ENCODE measurements at regions of chr2 and their contacts with region 1.

Region 1: GRCh38 chr2:43226558-43226954 is at the start of gene ZFP36L2:
- DNase-seq: peak; percentile 92
- ATAC-seq: peak; percentile 63
- H3K4me3 ChIP-seq: peak within 1 kb of the TSS; percentile 80 to 97 (median 89)
- H3K27ac ChIP-seq: peak within 1 kb of the TSS; percentile 95
- H3K4me1 ChIP-seq: peaks cover 54% of the 10 kb centered on the region
- H3K27me3 ChIP-seq: no peaks in the 10 kb centered on the region
- CTCF ChIP-seq: no peak; the same call in 1 of the 2 replicates
- EP300 ChIP-seq: peak in 1 of 2 experiments; percentile 15; a peak in 1 of 4 replicates
- POLR2A ChIP-seq: peak in 1 of 2 experiments; percentile 98; a peak in 2 of 4 replicates
- RAD21 ChIP-seq: peak; percentile 36; the same call in 1 of the 2 replicates
- total RNA-seq, gene ZFP36L2: 21.8 and 32.5 TPM in 2 replicates

Region 2: DNA sequence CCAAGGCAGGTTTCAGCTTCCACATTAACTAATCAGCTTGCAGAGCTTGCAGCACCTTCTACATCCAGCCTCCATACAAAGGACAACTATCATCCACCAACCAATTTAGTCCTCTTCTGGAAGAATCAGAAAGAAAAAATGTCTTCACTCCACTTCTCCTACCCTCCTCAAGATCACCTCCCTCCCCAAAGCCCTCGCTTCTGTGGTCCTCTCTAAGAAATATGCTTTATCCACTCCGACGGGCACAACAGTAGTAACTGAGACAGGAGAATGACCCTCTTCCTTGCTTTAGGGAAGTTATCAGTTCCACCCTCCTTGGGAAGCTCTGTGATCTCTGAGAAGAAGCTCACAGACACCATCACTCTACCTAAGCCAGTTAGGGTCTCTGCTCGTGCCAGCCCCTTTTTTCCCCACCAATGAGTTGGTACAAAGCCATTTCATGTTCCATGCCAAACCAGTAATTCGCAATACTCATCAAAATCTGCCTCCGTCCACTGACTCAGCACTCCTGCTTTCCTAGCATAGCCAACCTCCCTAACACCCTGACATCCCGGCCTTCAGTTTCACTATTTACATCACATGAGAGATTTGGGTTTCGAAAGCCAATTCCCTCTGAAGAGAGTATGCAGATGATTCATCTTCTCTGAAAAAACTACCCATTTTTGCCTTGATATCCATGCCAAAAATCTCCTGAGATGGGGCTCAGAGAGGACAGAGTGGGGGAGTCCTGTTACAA is 1292.8 kb before region 1 on chr2:
- CTCF ChIA-PET with region 1: no interaction called
- POLR2A ChIA-PET with region 1: no interaction called
- in situ Hi-C with region 1: no loop called
- intact Hi-C with region 1: no loop called
- DNase-seq: no peak
- ATAC-seq: no peak
- H3K4me3 ChIP-seq: no peak overlapping the region
- H3K27ac ChIP-seq: no peak overlapping the region
- H3K4me1 ChIP-seq: no peaks in the 10 kb centered on the region
- H3K27me3 ChIP-seq: peaks cover 0 to 44% of the 10 kb centered on the region in 2 experiments; a peak in 4 of 5 replicates
- CTCF ChIP-seq: no peak
- EP300 ChIP-seq: no peak
- POLR2A ChIP-seq: no peak
- RAD21 ChIP-seq: no peak

Region 3: DNA sequence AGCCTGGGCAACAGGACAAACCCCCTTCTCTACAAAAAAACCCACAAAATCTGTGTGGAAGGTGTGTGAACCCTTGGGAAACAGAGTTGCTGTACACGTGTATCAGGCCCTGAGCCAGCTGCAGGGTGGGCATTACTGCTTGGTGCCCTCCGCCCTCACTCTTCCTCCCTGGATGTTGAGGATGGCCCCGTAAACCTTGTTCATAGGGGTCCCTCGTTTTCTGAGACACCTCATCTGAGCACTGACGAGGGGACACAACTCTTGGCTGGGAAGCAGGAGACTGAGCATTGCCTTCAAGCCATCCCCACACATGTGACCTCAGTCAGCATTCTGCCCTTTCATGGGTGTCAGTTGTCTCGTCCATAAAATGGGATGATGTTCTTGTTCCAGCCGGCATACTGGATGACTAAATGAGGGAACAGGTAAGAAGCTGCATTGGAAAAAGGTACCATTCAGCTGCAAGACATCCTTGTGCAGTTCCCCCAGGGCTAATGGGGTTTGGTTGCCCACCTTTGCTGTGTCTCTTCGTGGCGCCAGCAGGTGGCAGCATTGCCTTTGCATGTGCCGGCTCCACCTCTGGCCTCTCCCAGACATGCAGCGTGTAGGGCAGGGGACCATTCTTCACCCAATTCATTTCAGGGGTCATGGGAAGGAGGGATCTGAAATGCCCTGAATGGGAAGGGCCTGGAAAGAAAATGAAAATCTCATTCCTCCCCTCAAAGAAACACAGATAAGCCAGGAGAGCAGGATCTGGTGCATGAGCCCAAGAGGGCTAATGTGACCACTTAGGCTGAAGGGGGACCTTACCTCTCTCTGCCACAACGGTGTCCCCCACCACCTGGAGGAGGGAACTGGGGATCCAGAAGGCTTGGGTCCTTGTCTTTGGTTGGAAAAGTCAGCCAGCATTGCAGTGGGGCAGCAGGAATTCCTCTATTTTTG is 397.8 kb before region 1 on chr2:
- CTCF ChIA-PET with region 1: interaction called, 14 read pairs
- POLR2A ChIA-PET with region 1: no interaction called
- in situ Hi-C with region 1: loop called (anchors 5 kb)
- intact Hi-C with region 1: loop called (anchors 1 kb)
- DNase-seq: peak; percentile 66
- ATAC-seq: peak; percentile 94
- H3K4me3 ChIP-seq: no peak overlapping the region
- H3K27ac ChIP-seq: no peak overlapping the region
- H3K4me1 ChIP-seq: peaks cover 31% of the 10 kb centered on the region
- H3K27me3 ChIP-seq: peaks cover 0 to 22% of the 10 kb centered on the region in 2 experiments; a peak in 3 of 5 replicates
- CTCF ChIP-seq: peak; percentile 99
- EP300 ChIP-seq: no peak
- POLR2A ChIP-seq: no peak
- RAD21 ChIP-seq: peak; percentile 95

Region 4: DNA sequence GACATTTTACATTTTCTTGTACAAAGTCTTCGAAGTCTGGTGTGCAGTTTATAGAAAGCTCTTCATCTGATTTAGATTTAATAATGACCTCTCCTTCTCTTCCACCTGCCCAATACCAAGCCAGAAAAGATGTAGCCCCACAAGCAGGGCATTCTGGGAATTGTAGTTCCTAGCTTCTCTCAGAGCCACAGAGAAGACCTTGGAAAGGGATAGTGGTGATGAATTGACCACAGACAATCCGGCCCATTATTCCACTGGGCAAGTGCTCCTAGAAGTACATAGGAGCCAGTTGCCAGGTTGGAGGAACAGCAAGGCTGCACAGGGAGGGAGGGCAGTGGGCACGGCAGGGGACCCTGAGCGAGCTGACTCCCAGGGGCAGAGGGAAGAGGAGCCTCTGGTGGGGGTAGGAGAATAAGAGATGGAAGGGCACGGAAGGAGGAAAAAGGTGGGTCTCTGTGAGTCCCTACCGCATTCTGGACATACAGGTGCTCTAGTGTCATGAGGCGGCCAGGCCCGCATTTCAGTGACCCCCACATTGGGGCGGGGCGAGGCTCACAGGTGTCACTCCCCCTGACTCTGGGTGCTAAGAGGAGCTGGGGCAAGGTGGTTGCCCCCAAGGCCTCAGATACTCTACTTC is 281.7 kb before region 1 on chr2:
- CTCF ChIA-PET with region 1: interaction called, 6 read pairs
- POLR2A ChIA-PET with region 1: interaction called, 27 read pairs
- in situ Hi-C with region 1: no loop called
- intact Hi-C with region 1: loop called (anchors 1 kb)
- DNase-seq: peak; percentile 59
- ATAC-seq: 0 out of 3 replicates have a peak, but pooled peaks have one; percentile 4
- H3K4me3 ChIP-seq: no peak overlapping the region
- H3K27ac ChIP-seq: no peak overlapping the region
- H3K4me1 ChIP-seq: peaks cover 95% of the 10 kb centered on the region
- H3K27me3 ChIP-seq: no peaks in the 10 kb centered on the region
- CTCF ChIP-seq: no peak
- EP300 ChIP-seq: no peak
- POLR2A ChIP-seq: no peak
- RAD21 ChIP-seq: no peak

Region 5: GRCh38 chr2:43024515-43025011 is 202.0 kb before region 1 on chr2:
- CTCF ChIA-PET with region 1: interaction called, 6 read pairs
- POLR2A ChIA-PET with region 1: interaction called, 9 read pairs
- in situ Hi-C with region 1: no loop called
- intact Hi-C with region 1: loop called (anchors 5 kb)
- DNase-seq: no peak
- ATAC-seq: peak; percentile 83
- H3K4me3 ChIP-seq: no peak overlapping the region
- H3K27ac ChIP-seq: no peak overlapping the region
- H3K4me1 ChIP-seq: peaks cover 60% of the 10 kb centered on the region
- H3K27me3 ChIP-seq: no peaks in the 10 kb centered on the region
- CTCF ChIP-seq: peak; percentile 98
- EP300 ChIP-seq: peak in 1 of 2 experiments; percentile 19; a peak in 1 of 4 replicates
- POLR2A ChIP-seq: no peak
- RAD21 ChIP-seq: peak; percentile 94

Region 6: DNA sequence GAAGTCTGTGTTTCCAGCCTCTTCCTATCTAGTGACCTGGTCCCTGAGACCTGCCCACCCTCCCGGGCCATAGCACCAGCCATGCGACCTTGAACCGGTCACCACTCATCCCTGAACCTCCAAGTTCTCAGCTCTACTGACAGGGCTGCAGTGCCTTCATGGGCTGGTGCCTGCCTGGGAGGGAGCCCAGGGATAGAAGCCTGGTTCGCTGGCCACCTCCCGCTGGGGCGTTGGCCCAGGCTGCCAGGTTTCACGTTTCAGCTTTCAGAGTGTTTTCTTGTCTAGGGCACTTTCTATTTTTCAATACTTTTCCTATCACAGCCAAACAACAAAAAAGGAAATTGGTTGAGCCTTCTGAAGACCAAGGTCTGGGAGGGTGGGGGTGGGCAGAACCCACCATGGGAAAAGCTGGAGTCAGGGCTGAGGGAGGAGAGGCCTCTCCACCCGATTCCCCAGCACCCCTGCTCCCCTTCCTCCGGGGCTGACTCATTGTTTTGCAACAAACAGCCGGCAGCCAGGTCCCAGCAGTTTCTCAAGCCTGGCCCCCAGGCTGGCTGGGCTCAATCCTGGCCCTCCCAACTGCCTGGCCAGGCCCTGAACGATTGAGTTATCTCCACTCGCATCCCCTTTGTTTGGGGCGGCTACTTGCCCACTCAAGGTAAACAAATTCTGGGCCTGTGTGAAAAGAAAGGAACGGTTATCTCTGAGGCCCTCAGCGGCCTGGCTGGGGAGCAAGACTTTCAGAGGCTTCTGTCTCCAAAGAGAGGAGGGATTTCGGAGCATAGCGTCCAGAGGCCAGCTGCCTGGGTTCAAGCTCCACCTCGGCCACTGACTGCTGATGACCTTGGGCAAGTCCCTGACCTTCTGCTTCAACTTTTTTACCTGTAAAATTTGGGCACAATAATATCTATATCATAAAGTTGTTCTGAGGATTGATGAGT is 47.7 kb before region 1 on chr2:
- CTCF ChIA-PET with region 1: no interaction called
- POLR2A ChIA-PET with region 1: interaction called, 79 read pairs
- in situ Hi-C with region 1: no loop called
- intact Hi-C with region 1: no loop called
- DNase-seq: peak; percentile 90
- ATAC-seq: peak; percentile 88
- H3K4me3 ChIP-seq: peak overlapping the region; percentile 43 to 62 (median 61)
- H3K27ac ChIP-seq: peak overlapping the region; percentile 81
- H3K4me1 ChIP-seq: peaks cover 77% of the 10 kb centered on the region
- H3K27me3 ChIP-seq: no peaks in the 10 kb centered on the region
- CTCF ChIP-seq: peak; percentile 1; the same call in 1 of the 2 replicates
- EP300 ChIP-seq: peak in 1 of 2 experiments; percentile 77; a peak in 2 of 4 replicates
- POLR2A ChIP-seq: no peak; a peak in 1 of 4 replicates
- RAD21 ChIP-seq: peak; percentile 20; the same call in 1 of the 2 replicates

Region 7: DNA sequence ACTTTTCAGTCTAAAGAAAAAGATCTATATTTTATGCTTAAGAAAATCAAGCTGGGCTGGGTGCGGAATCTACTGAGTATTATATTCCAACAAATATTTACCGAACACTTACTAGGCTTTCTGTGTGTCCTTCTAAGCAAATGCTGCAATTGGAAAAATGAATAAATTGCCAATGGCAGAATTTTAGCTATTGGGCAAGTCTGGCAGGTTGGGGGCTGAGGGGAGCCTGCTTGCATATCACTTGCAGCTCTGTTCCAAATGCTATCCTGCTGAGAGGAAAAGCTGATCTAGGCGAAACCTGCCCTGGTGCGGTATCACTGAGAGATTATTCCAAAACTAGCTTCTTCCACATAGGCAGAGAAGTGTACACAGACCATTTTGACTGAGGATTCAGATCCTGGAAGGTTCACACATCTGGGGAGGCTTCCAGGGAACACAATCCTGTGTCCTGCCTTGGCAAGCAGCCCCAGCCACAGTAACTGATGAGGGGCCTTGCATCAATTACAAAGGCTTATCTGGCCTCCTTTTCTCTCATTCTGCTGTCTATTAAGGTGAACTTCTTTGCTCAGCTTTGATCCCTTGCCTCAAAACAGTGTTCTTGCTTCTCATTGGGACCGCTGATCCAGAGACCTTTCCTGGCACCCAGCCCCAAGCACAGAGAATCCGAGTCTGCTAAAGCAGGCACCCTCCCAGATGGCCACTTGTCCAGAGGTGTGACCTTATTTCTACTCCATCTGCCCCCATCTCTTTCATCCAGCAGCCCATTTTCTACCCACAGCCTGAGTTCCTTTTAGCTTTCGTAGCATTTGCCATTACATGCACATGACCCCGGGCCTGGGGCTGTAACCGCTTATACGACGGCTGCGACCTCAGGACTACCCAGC is 52.0 kb after region 1 on chr2:
- CTCF ChIA-PET with region 1: no interaction called
- POLR2A ChIA-PET with region 1: no interaction called
- in situ Hi-C with region 1: no loop called
- intact Hi-C with region 1: no loop called
- DNase-seq: no peak
- ATAC-seq: no peak
- H3K4me3 ChIP-seq: no peak overlapping the region
- H3K27ac ChIP-seq: no peak overlapping the region
- H3K4me1 ChIP-seq: 0 out of 2 replicates have a peak, but pooled peaks cover 10% of the 10 kb centered on the region
- H3K27me3 ChIP-seq: no peaks in the 10 kb centered on the region
- CTCF ChIP-seq: no peak
- EP300 ChIP-seq: no peak
- POLR2A ChIP-seq: no peak
- RAD21 ChIP-seq: no peak

Region 8: GRCh38 chr2:43389581-43390466 is 163.3 kb after region 1 on chr2:
- CTCF ChIA-PET with region 1: no interaction called
- POLR2A ChIA-PET with region 1: interaction called, 13 read pairs
- in situ Hi-C with region 1: no loop called
- intact Hi-C with region 1: no loop called
- DNase-seq: peak; percentile 83
- ATAC-seq: peak; percentile 92
- H3K4me3 ChIP-seq: peak overlapping the region in 2 of 3 experiments; percentile 2 to 35; a peak in 1 of 6 replicates
- H3K27ac ChIP-seq: peak overlapping the region; percentile 68
- H3K4me1 ChIP-seq: peaks cover 52% of the 10 kb centered on the region
- H3K27me3 ChIP-seq: no peaks in the 10 kb centered on the region
- CTCF ChIP-seq: no peak
- EP300 ChIP-seq: peak in 1 of 2 experiments; percentile 95; a peak in 2 of 4 replicates
- POLR2A ChIP-seq: no peak
- RAD21 ChIP-seq: no peak